Caco-2 (cell line): ENCODE measurements at regions of chr4 and their contacts with region 1.

Region 1: DNA sequence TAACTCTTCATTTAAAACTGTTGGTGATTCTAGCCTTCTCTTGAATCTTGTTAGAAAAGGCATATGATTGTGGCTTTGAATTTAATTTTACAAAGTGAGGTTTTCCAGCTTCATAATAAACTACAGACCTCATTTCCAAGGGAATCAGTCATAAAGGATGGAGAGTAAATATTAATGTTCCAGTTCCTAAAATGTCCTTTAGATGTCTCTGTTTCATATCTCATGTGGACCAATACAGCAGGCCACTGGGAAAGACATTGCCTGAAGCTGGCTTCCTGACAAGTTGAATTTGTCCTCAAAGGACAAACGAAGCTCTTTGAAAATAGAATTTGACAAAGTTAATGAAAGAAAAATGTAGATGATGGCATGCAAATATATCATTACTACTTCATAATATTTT is 125.4 kb downstream of the ZNF330 start:
- DNase-seq: peak in 1 of 2 experiments; percentile 11
- H3K4me3 ChIP-seq: no peak overlapping the region
- H3K4me3 Mint-ChIP-seq: no peak overlapping the region
- H3K27ac Mint-ChIP-seq: no peak overlapping the region
- H3K4me1 ChIP-seq: no peaks in the 10 kb centered on the region
- H3K4me1 Mint-ChIP-seq: no peaks in the 10 kb centered on the region
- H3K27me3 ChIP-seq: no peaks in the 10 kb centered on the region
- H3K27me3 Mint-ChIP-seq: peaks cover 12% of the 10 kb centered on the region
- CTCF ChIP-seq: peak in 1 of 2 experiments; percentile 28

Region 2: GRCh38 chr4:141711014-141711610 is 365.0 kb after region 1 on chr4:
- CTCF ChIA-PET with region 1: no interaction called
- POLR2A ChIA-PET with region 1: no interaction called
- intact Hi-C with region 1: loop called (anchors 1 kb)
- DNase-seq: no peak
- H3K4me3 ChIP-seq: no peak overlapping the region
- H3K4me3 Mint-ChIP-seq: no peak overlapping the region
- H3K27ac Mint-ChIP-seq: no peak overlapping the region
- H3K4me1 ChIP-seq: no peaks in the 10 kb centered on the region
- H3K4me1 Mint-ChIP-seq: no peaks in the 10 kb centered on the region
- H3K27me3 ChIP-seq: no peaks in the 10 kb centered on the region
- H3K27me3 Mint-ChIP-seq: no peaks in the 10 kb centered on the region
- CTCF ChIP-seq: peak; percentile 37 to 56